AG04450 (cell line): ENCODE measurements at regions of chr7 and their contacts with region 1.

Region 1: DNA sequence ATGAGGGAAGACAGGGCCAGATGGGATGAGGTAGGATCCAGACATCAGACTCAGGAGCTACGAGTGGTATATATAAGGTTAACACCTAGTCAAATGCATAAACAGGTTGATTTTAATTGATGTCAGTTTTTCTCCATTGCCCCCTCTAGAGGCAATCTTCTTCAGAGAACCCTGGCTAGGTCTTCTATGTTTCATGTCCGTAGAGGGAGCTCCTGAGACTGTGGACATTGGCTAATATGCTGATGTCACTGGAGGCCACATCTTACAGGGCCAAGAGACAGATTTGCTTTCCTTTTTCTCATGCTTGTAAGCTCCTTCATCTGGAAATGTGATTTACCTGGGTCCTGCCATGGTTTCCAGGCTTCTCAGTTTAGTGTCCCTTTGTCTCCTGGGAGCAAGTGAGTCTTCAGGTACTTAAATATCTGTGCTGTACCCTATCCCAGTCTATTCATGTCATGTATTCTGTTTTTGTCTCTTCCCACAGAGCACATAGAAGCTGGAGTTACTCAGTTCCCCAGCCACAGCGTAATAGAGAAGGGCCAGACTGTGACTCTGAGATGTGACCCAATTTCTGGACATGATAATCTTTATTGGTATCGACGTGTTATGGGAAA is 161.6 kb upstream of the PRSS1 start:
- DNase-seq: no peak
- H3K4me3 ChIP-seq: no peak overlapping the region
- H3K27ac ChIP-seq: no peak overlapping the region
- H3K27me3 ChIP-seq: no peaks in the 10 kb centered on the region
- CTCF ChIP-seq: peak; percentile 69

Region 2: DNA sequence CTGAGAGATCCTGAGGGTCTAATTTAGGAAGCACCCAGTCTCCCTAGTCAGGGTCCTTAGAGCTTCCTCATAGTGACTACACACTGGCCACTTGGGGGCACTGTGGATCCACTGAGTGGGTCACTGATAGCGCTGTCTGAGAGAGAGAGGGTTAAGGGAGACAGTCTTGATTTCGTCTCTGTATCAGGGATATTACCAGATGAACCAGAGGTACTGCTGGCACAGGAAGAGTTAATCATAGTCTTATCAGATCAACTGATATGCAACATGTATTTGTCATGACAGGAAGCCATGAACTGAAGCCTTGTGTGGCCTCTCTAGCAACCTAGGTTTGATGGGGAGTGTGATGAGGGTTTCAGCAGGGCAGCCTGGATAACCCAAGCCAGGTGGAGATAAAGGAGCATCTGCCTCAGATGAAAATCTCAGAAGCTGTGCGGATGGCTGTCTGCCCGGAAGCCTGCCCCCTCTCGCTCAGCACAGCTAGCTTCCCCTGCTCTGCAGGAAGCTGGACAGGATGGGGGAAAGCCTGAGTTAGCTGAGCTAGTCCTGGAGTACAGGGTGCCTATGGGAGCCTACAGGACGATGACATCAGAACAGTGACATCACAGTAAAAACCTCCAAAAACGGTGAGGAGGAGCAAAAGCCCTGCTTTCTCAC is 52.4 kb before region 1 on chr7:
- CTCF ChIA-PET with region 1: interaction called, 58 read pairs
- POLR2A ChIA-PET with region 1: no interaction called
- DNase-seq: peak; percentile 69
- H3K4me3 ChIP-seq: no peak overlapping the region
- H3K27ac ChIP-seq: no peak overlapping the region
- H3K27me3 ChIP-seq: no peaks in the 10 kb centered on the region
- CTCF ChIP-seq: peak; percentile 92

Region 3: DNA sequence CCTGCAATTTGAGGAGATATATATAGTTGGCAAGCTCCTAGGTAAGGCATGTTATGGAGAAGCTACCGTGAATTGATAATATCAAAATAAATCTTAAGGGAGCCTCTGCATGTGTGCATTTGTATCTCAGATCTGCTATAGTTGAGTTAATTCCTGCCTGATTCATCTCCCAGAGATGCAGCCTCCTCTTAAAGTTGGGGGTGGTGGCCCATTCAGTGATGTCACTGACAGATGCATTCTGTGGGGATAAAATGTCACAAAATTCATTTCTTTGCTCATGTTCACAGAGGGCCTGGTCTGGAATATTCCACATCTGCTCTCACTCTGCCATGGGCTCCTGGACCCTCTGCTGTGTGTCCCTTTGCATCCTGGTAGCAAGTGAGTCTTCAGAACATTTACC is 24.2 kb before region 1 on chr7:
- CTCF ChIA-PET with region 1: interaction called, 23 read pairs
- POLR2A ChIA-PET with region 1: no interaction called
- DNase-seq: no peak
- H3K4me3 ChIP-seq: no peak overlapping the region
- H3K27ac ChIP-seq: peak overlapping the region; percentile 61
- H3K27me3 ChIP-seq: no peaks in the 10 kb centered on the region
- CTCF ChIP-seq: no peak

Region 4: GRCh38 chr7:142598297-142598696 is 10.6 kb after region 1 on chr7:
- CTCF ChIA-PET with region 1: interaction called, 34 read pairs
- POLR2A ChIA-PET with region 1: no interaction called
- DNase-seq: no peak
- H3K4me3 ChIP-seq: no peak overlapping the region
- H3K27ac ChIP-seq: no peak overlapping the region
- H3K27me3 ChIP-seq: peaks cover 2% of the 10 kb centered on the region
- CTCF ChIP-seq: no peak

Region 5: DNA sequence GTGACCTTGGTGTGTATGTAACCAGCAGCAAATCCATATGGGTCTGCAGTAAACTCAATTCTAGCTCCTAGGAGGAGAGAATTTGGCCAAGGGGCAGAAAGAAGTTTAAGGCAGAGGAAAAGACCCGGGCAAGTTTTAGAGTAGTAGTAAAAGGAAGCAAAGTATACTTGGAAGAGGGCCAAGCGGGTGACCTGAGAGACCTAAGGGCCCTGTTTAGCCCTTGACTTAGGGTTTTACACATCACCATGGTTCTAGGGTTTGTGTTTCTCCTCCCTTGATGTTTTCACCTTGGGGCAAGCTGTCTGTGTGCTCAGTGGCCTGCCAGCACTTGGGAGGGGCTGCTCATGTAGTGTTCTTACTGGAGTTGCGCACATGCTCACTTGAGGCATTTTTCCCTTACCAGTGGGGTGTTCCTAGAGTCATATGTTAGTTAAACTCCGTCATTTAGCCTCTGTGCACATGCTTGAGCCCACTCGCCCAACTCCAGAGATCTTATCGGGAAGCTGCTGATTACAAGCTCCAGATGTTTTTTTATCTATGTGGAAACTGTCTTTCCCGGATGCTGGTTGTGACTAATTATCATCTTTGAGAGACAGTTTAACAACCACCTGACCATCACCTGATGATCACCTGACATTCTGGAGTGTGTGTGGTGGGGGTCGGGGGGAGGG is 24.0 kb after region 1 on chr7:
- CTCF ChIA-PET with region 1: interaction called, 16 read pairs
- POLR2A ChIA-PET with region 1: no interaction called
- DNase-seq: no peak
- H3K4me3 ChIP-seq: no peak overlapping the region
- H3K27ac ChIP-seq: no peak overlapping the region
- H3K27me3 ChIP-seq: peaks cover 2% of the 10 kb centered on the region
- CTCF ChIP-seq: no peak